Activated naive CD4-positive, alpha-beta T cell treated with anti-CD3 and anti-CD28 coated beads, Interleukin-2, amount 10 ng/mL, durations not matched to agents 7 days and 5 days (primary cell): ENCODE measurements at regions of chr6 and their contacts with region 1.

Region 1: GRCh38 chr6:79570129-79571029 is 33.1 kb upstream of the LCA5 start:
- DNase-seq: no peak
- H3K4me3 Mint-ChIP-seq: no peak overlapping the region
- H3K27ac Mint-ChIP-seq: no peak overlapping the region
- H3K4me1 Mint-ChIP-seq: no peaks in the 10 kb centered on the region
- H3K27me3 Mint-ChIP-seq: no peaks in the 10 kb centered on the region

Region 2: DNA sequence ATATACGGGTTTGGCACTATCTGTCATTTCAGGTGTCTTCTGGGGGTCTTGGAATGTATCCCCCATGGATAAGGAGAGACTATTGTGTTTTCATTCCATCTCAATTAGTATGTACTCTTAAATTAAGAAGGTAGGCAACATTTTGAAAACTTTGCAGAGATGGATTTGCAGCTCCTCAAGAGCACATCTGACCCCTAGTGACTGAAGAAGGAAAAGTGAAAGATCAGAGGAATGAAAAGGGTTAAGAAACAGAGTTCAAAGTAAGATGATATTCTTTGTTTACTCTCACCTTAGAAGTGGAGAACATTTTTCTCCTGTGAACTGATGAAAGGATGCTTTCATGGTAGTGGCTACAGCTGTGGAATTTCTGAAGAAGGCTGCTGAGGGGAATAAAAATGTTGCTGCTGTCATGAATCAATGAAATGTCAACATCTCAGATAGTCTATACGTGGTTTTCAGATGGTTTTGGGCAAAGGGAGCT is 102.3 kb after region 1 on chr6:
- CTCF ChIA-PET with region 1: interaction called, 22 read pairs
- DNase-seq: no peak
- H3K4me3 Mint-ChIP-seq: no peak overlapping the region
- H3K27ac Mint-ChIP-seq: no peak overlapping the region
- H3K4me1 Mint-ChIP-seq: peaks cover 23% of the 10 kb centered on the region
- H3K27me3 Mint-ChIP-seq: no peaks in the 10 kb centered on the region